Ovary (tissue), 10 donors: ENCODE measurements at regions of chr4 and their contacts with region 1.

Region 1: DNA sequence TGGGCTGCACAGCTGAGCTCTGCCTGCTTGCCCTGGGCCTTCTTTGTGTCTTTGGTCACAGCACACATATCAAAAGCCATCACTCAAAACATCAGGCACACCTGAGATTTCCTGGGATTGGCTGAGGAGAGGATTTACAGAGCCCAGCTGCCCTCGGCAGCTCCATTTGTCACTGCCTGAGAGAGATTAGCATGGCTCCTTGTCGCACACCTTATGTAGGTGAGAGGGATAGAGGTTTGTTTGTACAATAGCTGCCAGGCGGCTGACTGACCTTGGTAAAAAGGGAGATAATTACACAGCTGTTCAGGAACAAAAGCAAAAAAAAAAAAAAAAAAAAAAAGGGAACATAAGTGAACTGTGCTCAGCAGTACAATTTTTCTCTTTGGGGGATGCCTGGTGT is 63.2 kb downstream of the MGST2 start:
- DNase-seq: no peak
- H3K4me3 ChIP-seq: no peak overlapping the region
- H3K27ac ChIP-seq: peak overlapping the region in 1 of 2 donors; percentile 30
- H3K4me1 ChIP-seq: peaks cover 13% of the 10 kb centered on the region
- H3K27me3 ChIP-seq: no peaks in the 10 kb centered on the region
- CTCF ChIP-seq: no peak
- EP300 ChIP-seq: no peak
- POLR2A ChIP-seq: no peak

Region 2: GRCh38 chr4:139665690-139666529 is 62.9 kb before region 1 on chr4 and contains the start of gene MGST2:
- intact Hi-C with region 1: loop called in 1 of 4 experiments (anchors 10 kb)
- DNase-seq: peak; percentile 57 to 81 (median 73)
- H3K4me3 ChIP-seq: peak within 1 kb of the TSS; percentile 38
- H3K27ac ChIP-seq: peak within 1 kb of the TSS; percentile 59 to 66
- H3K4me1 ChIP-seq: peaks cover 2% of the 10 kb centered on the region
- H3K27me3 ChIP-seq: no peaks in the 10 kb centered on the region
- CTCF ChIP-seq: no peak
- EP300 ChIP-seq: no peak
- POLR2A ChIP-seq: peak; percentile 11
- total RNA-seq, gene MGST2: 14.5 to 64.9 (median 28.1) TPM